GM12878 (cell line): ENCODE measurements at regions of chr5 and their contacts with region 1.

Region 1: GRCh38 chr5:112757468-112758208 is 20.0 kb downstream of the APC start:
- DNase-seq: peak; percentile 31
- ATAC-seq: peak; percentile 96
- H3K4me3 ChIP-seq: no peak overlapping the region
- H3K27ac ChIP-seq: no peak overlapping the region
- H3K4me1 ChIP-seq: no peaks in the 10 kb centered on the region
- H3K27me3 ChIP-seq: no peaks in the 10 kb centered on the region
- CTCF ChIP-seq: peak; percentile 58 to 77 (median 75); a peak in 5 of 6 replicates
- EP300 ChIP-seq: no peak
- POLR2A ChIP-seq: no peak
- RAD21 ChIP-seq: peak; percentile 86

Region 2: GRCh38 chr5:112174959-112175594 is 582.6 kb before region 1 on chr5:
- CTCF ChIA-PET with region 1: interaction called, 15 read pairs
- POLR2A ChIA-PET with region 1: no interaction called
- RAD21 ChIA-PET with region 1: interaction called, 13 read pairs
- SMC1A ChIA-PET with region 1: interaction called, 6 read pairs
- in situ Hi-C with region 1: no loop called
- intact Hi-C with region 1: loop called (anchors 10 kb)
- DNase-seq: no peak
- ATAC-seq: peak; percentile 95
- H3K4me3 ChIP-seq: no peak overlapping the region
- H3K27ac ChIP-seq: no peak overlapping the region
- H3K4me1 ChIP-seq: no peaks in the 10 kb centered on the region
- H3K27me3 ChIP-seq: peaks cover 0 to 2% of the 10 kb centered on the region in 2 experiments; a peak in 1 of 4 replicates
- CTCF ChIP-seq: peak; percentile 44 to 75 (median 66)
- EP300 ChIP-seq: no peak
- POLR2A ChIP-seq: no peak
- RAD21 ChIP-seq: peak; percentile 71

Region 3: DNA sequence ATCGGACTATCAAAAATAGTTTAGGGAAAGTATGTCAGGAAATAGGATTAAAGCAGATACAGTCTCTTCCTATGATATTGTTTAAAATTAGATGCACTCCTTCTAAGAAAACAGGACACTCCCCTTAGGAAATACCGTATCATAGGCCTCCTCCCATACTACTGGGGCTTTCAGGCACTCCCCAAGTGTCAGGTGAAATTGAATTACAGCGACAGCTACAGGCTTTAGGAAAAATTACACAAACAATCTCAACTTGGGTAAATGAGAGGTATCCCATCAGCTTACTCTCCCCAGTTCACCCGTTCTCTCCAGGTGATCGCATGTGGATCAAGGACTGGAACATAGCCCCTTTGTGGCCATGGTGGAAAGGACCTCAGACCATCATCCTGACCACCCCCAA is 228.1 kb before region 1 on chr5:
- CTCF ChIA-PET with region 1: interaction called, 12 read pairs
- POLR2A ChIA-PET with region 1: no interaction called
- RAD21 ChIA-PET with region 1: interaction called, 10 read pairs
- SMC1A ChIA-PET with region 1: interaction called, 7 read pairs
- in situ Hi-C with region 1: no loop called
- intact Hi-C with region 1: no loop called
- DNase-seq: no peak
- ATAC-seq: peak; percentile 71
- H3K4me3 ChIP-seq: no peak overlapping the region
- H3K27ac ChIP-seq: no peak overlapping the region
- H3K4me1 ChIP-seq: peaks cover 26% of the 10 kb centered on the region
- H3K27me3 ChIP-seq: no peaks in the 10 kb centered on the region
- CTCF ChIP-seq: peak; percentile 57 to 61 (median 58); a peak in 5 of 6 replicates
- EP300 ChIP-seq: no peak
- POLR2A ChIP-seq: no peak
- RAD21 ChIP-seq: peak; percentile 65

Region 4: DNA sequence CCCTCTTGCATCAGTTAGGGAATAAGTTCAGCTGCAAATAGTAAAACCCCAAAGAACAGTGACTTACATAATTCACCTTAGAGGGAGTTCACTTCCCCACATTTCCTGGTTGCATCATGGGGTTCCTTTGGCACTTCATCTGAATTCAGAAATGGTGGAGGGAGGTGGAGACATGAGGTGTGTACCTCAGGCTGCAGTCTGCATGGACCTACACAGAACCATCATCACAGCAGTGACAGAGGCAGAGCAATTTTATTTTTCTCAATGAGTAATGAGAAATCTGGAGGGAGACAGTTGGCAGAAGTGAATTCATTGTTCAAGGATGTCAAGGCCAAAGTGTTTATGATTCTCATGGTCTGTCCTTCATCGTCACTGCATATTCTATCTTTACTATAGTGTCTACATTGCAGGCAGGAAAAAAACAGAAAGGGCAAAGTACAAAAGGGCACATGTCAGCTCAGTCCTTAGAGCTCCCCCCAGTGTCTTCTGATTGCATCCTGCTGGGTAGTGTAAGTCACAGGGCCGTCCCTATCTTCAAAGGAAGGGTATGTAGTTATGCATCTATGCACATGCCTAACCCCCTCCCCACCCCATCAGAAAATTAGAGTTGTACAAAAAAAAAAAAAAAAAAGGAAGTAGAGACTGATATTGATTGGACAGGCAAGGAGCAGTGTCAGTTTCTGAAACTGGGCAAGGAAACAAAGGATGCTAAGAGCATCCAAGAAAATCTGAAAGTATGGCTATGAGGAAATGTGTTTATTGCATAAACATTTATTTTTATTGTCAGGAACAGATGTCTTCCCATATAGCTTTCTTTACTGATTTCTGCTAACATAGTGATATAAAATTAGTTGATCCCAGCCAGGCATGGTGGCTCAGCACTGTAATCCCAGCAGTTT is 152.7 kb before region 1 on chr5:
- CTCF ChIA-PET with region 1: interaction called, 21 read pairs
- POLR2A ChIA-PET with region 1: no interaction called
- RAD21 ChIA-PET with region 1: interaction called, 12 read pairs
- SMC1A ChIA-PET with region 1: interaction called, 35 read pairs
- in situ Hi-C with region 1: no loop called
- intact Hi-C with region 1: loop called (anchors 5 kb)
- DNase-seq: peak; percentile 13
- ATAC-seq: peak; percentile 97
- H3K4me3 ChIP-seq: no peak overlapping the region
- H3K27ac ChIP-seq: no peak overlapping the region
- H3K4me1 ChIP-seq: no peaks in the 10 kb centered on the region
- H3K27me3 ChIP-seq: no peaks in the 10 kb centered on the region; a peak in 1 of 4 replicates
- CTCF ChIP-seq: peak; percentile 44 to 65 (median 60); a peak in 5 of 6 replicates
- EP300 ChIP-seq: no peak
- POLR2A ChIP-seq: no peak
- RAD21 ChIP-seq: peak; percentile 44

Region 5: GRCh38 chr5:112691758-112692157 is 65.9 kb before region 1 on chr5:
- CTCF ChIA-PET with region 1: interaction called, 125 read pairs
- POLR2A ChIA-PET with region 1: interaction called, 3 read pairs
- RAD21 ChIA-PET with region 1: interaction called, 57 read pairs
- SMC1A ChIA-PET with region 1: interaction called, 43 read pairs
- in situ Hi-C with region 1: no loop called
- intact Hi-C with region 1: loop called (anchors 1 kb)
- DNase-seq: peak; percentile 19
- ATAC-seq: peak; percentile 89
- H3K4me3 ChIP-seq: no peak overlapping the region
- H3K27ac ChIP-seq: no peak overlapping the region
- H3K4me1 ChIP-seq: peaks cover 9% of the 10 kb centered on the region
- H3K27me3 ChIP-seq: peaks cover 0 to 1% of the 10 kb centered on the region in 2 experiments; a peak in 2 of 4 replicates
- CTCF ChIP-seq: peak; percentile 46 to 56 (median 50); a peak in 4 of 6 replicates
- EP300 ChIP-seq: no peak
- POLR2A ChIP-seq: no peak
- RAD21 ChIP-seq: peak; percentile 79

Region 6: DNA sequence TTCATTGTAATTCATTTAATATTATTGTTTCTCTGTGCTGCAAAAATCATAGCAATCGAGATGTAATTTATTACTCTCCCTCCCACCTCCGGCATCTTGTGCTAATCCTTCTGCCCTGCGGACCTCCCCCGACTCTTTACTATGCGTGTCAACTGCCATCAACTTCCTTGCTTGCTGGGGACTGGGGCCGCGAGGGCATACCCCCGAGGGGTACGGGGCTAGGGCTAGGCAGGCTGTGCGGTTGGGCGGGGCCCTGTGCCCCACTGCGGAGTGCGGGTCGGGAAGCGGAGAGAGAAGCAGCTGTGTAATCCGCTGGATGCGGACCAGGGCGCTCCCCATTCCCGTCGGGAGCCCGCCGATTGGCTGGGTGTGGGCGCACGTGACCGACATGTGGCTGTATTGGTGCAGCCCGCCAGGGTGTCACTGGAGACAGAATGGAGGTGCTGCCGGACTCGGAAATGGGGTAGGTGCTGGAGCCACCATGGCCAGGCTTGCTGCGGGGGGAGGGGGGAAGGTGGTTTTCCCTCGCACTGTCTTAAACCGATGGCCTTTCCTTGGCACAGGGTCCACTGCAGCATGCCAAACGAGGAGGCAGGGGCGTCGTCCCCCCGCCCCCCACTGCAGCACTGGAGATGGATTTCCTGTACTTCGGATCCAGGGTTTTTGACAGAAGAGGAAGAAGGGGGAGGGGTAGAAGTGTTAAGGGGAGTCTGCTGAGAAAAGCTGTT is 20.0 kb before region 1 on chr5 and contains the start of gene APC:
- CTCF ChIA-PET with region 1: interaction called, 14 read pairs
- POLR2A ChIA-PET with region 1: no interaction called
- RAD21 ChIA-PET with region 1: interaction called, 7 read pairs
- SMC1A ChIA-PET with region 1: interaction called, 6 read pairs
- in situ Hi-C with region 1: no loop called
- intact Hi-C with region 1: no loop called
- DNase-seq: peak; percentile 46
- ATAC-seq: peak; percentile 99
- H3K4me3 ChIP-seq: peak within 1 kb of the TSS; percentile 99
- H3K27ac ChIP-seq: peak within 1 kb of the TSS; percentile 76
- H3K4me1 ChIP-seq: no peaks in the 10 kb centered on the region
- H3K27me3 ChIP-seq: no peaks in the 10 kb centered on the region
- CTCF ChIP-seq: no peak
- EP300 ChIP-seq: no peak
- POLR2A ChIP-seq: peak; percentile 86
- RAD21 ChIP-seq: no peak
- polyA plus RNA-seq, gene APC: 3.2 to 7.2 TPM

Region 7: DNA sequence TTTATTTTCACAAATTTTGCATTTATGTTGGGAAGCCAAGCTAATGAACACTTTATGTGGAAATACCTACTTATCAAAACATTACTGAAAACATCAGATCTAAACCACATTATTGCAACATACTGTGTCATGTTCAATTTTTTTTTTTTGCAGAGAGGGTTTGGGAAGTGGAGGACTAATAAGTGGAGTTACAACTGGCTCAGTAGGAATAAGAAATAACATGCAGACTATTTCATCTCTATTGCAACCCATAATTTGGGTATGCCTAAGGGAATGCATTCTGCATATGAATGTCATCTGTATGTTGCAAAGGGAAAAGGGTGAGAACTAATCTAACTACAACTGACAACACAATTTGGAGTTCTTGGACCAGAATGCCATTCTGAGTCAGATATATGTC is 21.9 kb after region 1 on chr5:
- CTCF ChIA-PET with region 1: interaction called, 8 read pairs
- POLR2A ChIA-PET with region 1: no interaction called
- RAD21 ChIA-PET with region 1: interaction called, 3 read pairs
- SMC1A ChIA-PET with region 1: interaction called, 10 read pairs
- in situ Hi-C with region 1: no loop called
- intact Hi-C with region 1: no loop called
- DNase-seq: no peak
- ATAC-seq: no peak
- H3K4me3 ChIP-seq: no peak overlapping the region
- H3K27ac ChIP-seq: no peak overlapping the region
- H3K4me1 ChIP-seq: no peaks in the 10 kb centered on the region
- H3K27me3 ChIP-seq: no peaks in the 10 kb centered on the region
- CTCF ChIP-seq: no peak
- EP300 ChIP-seq: no peak
- POLR2A ChIP-seq: no peak
- RAD21 ChIP-seq: no peak